Sciatic nerve (tissue), 2 donors: ENCODE measurements at regions of chr11 and their contacts with region 1.

Region 1: DNA sequence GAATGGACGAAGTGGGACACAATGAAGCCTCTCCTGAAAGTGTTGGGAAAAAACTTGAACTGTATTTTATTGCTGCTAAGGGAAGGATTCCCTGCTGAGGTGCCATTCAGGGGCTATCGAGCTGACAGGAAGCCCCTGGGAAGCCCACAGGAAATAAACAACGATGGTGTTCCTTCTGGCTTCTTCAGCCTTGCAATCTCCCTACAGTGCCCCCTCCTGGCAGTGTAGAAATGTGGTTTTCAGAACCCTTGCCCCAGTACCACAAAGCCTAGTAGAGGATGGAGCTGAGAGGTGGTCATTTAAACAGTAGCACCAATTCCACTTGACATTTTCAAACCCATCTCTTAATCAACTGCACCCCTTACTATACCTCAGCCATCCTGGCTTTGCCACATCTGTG is 676.7 kb upstream of the ARHGAP42 start:
- DNase-seq: no peak
- ATAC-seq: no peak

Region 2: DNA sequence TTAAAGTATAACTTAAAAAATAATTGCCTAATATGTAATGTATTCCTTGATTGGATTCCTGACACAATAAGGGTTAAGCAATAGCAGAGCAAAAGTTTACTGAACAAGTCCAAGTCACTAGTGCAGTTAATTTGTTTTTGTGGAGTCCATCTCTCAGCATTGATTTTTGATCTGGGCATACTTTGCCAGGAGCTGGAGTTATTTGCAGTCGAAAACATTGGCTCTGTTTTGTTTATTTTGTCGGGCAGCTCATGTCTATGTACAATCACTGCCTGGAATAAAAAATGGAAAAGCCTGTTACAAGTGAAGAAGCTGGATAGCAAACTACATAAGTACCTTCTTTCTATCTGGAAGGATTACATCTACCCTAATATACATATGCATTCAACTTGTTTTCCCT is 364.5 kb before region 1 on chr11:
- intact Hi-C with region 1: no loop called
- DNase-seq: no peak
- ATAC-seq: no peak

Region 3: GRCh38 chr11:100956351-100956750 is 946.0 kb after region 1 on chr11:
- intact Hi-C with region 1: loop called (anchors 10 kb)
- DNase-seq: no peak
- ATAC-seq: no peak